ENCODE measurements at regions of chr3 and their contacts with region 1.

Region 1: DNA sequence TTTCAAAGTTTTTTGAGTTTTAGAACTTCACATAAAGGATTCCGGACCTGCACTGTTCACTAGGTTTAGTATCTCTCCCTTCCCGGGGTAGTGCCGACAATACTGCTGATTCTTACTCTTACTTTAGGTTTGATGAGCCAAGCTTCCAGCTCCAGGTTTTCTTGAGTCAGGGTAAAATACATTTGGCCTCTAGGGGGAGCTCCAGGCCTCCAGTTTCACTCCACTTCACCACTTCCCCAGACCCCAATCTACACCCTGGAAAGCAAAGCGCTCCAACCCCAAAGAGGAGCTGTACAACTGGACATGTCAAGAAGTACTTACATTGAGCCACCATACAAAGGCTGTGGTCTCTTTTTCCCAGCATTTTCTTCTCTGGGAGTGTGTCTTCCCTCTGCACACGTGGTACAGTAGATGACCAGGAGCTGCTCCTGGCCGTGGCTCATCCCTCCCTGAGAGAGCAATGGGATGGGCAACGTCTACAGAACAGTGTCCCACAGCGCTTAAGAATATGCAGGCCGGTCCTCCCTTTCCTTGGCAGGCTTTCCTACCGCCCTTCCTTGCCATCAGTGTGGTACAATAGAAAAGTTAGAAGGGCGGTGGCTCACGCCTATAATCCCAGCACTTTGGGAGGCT is 93.9 kb upstream of the CCDC80 start:
- H3K4me3 Mint-ChIP-seq: no peak overlapping the region
- H3K27ac Mint-ChIP-seq: no peak overlapping the region
- H3K4me1 Mint-ChIP-seq: peaks cover 30% of the 10 kb centered on the region
- H3K27me3 Mint-ChIP-seq: no peaks in the 10 kb centered on the region

Region 2: GRCh38 chr3:112979240-112979832 is 244.5 kb after region 1 on chr3:
- intact Hi-C with region 1: loop called (anchors 2 kb)
- H3K4me3 Mint-ChIP-seq: no peak overlapping the region
- H3K27ac Mint-ChIP-seq: no peak overlapping the region
- H3K4me1 Mint-ChIP-seq: peaks cover 59% of the 10 kb centered on the region
- H3K27me3 Mint-ChIP-seq: no peaks in the 10 kb centered on the region

Measured in dendritic cell treated with granulocyte-macrophage colony-stimulating factor and Interleukin-4, amounts not matched to agents 40 ng/mL and 50 ng/mL, for 4 days (primary cell).